CD8-positive, alpha-beta T cell (primary cell): ENCODE measurements at regions of chr1 and their contacts with region 1.

Region 1: GRCh38 chr1:205440476-205441317 is 15.1 kb downstream of the BLACAT1 start:
- DNase-seq: peak; percentile 32 to 85 (median 75)
- ATAC-seq: peak; percentile 95
- H3K4me3 ChIP-seq: peak overlapping the region; percentile 38 to 53
- H3K4me3 Mint-ChIP-seq: peak overlapping the region; percentile 82
- H3K27ac ChIP-seq: peak overlapping the region; percentile 47 to 77
- H3K27ac Mint-ChIP-seq: peak overlapping the region; percentile 92
- H3K4me1 ChIP-seq: peaks cover 25% of the 10 kb centered on the region
- H3K4me1 Mint-ChIP-seq: peaks cover 42% of the 10 kb centered on the region
- H3K27me3 ChIP-seq: no peaks in the 10 kb centered on the region
- H3K27me3 Mint-ChIP-seq: no peaks in the 10 kb centered on the region
- CTCF ChIP-seq: no peak

Region 2: GRCh38 chr1:205477759-205478247 is 37.1 kb after region 1 on chr1:
- CTCF ChIA-PET with region 1: interaction called, 4 read pairs
- POLR2A ChIA-PET with region 1: interaction called, 4 read pairs
- intact Hi-C with region 1: loop called in 1 of 2 experiments (anchors 5 kb)
- DNase-seq: no peak
- ATAC-seq: no peak
- H3K4me3 ChIP-seq: no peak overlapping the region
- H3K4me3 Mint-ChIP-seq: no peak overlapping the region
- H3K27ac ChIP-seq: no peak overlapping the region
- H3K27ac Mint-ChIP-seq: no peak overlapping the region
- H3K4me1 ChIP-seq: peaks cover 27% of the 10 kb centered on the region
- H3K4me1 Mint-ChIP-seq: peaks cover 31% of the 10 kb centered on the region
- H3K27me3 ChIP-seq: peaks cover 0 to 4% of the 10 kb centered on the region in 2 experiments
- H3K27me3 Mint-ChIP-seq: peaks cover 29% of the 10 kb centered on the region
- CTCF ChIP-seq: no peak